Common myeloid progenitor, CD34-positive (primary cell): ENCODE measurements at regions of chr4 and their contacts with region 1.

Region 1: GRCh38 chr4:6327041-6327917 is 57.6 kb downstream of the WFS1 start:
- DNase-seq: peak; percentile 59 to 81 (median 77)
- H3K4me3 ChIP-seq: no peak overlapping the region
- H3K27ac ChIP-seq: no peak overlapping the region
- H3K4me1 ChIP-seq: peaks cover 0 to 23% (median 20%) of the 10 kb centered on the region in 4 experiments
- H3K27me3 ChIP-seq: peaks cover 0 to 70% (median 9%) of the 10 kb centered on the region in 5 experiments

Region 2: DNA sequence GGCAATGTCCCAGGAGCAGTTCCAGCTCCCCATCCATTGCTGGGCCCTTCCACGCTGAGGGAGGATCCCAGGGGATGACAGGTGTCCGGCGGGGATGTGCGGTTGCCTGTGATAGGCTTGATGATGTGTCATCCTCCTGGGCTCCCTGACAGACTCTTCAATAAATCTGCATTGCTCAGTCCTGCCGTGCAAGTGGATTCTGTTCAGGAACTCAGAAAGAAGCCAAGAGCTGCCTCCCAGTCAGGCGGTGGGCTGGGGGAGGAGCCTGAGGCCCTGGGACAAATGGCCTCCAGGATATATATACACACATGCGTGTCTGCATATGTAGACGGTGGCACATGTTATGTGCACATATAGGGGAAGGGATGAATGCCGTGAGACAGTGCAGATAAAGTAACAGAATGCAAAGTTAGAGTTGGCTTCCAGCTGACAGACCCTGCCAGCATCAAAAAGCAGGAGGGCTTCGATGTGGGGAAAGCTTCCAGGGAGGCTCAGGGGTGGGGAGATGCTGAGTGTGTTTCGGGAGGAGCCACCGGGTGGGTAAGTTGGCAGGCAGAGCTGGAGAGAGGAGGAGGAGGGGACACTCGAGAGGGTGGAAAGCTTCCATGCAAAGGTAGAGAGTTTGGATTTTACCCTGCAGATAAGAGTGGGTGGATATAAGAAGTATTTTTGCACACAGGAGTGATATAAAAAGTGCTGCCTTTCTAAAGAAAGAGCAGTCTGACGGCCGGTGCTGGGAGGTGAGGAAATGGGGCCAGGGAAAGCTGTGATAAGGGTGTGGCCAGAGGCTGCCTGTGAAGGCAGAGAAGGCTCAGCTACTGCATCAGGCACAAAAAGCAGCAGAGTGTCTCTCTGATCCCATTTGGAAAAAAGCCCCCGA is 405.9 kb before region 1 on chr4:
- CTCF ChIA-PET with region 1: no interaction called
- POLR2A ChIA-PET with region 1: no interaction called
- DNase-seq: no peak
- H3K4me3 ChIP-seq: no peak overlapping the region
- H3K27ac ChIP-seq: no peak overlapping the region
- H3K4me1 ChIP-seq: no peaks in the 10 kb centered on the region
- H3K27me3 ChIP-seq: peaks cover 0 to 71% (median 16%) of the 10 kb centered on the region in 5 experiments

Region 3: DNA sequence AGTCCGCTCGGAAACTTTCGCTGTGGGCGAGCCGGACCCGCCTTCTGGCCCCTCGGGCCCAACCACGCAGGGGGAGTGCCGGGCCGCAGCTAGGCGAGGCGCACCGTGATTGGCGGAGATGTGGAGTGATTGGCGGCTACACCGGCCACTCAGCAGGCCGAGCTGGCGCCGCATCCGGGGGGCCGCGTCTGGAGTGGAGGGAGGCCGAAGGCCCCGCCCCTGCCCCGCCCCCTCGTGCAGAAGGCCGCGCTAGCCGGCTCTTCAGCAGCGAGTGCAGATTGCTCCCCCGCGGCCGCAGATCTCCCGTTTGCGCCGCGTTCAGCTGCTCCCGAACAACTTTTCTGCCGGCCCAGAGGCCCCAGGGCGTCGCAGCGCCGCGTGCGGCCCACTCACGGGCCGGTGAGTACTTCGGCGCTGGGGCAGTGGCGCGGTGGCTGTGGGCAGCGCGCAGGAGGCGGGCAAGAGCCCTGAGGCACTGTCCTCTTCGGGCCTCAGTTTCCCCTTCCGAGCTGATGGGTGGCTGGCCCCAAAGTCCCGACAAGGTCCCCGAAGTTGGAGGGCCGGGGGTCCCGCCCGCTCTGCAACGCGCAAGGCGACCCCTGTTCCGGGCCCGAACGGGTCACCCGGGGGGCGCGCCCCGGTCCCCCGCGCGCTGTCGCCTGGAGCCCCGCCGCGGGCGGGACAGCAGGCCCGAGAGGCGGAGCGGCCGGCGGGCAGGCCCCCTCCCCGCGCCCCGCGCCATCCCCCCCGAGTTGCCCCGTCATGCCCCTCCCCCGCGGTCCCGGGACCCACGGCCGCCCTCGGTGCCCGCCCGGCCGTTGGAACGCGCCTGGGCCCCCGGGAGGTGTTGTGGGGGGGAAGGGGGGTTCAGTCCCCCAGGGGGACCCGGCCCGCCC is 57.4 kb before region 1 on chr4 and contains the start of gene WFS1:
- CTCF ChIA-PET with region 1: interaction called, 452 read pairs
- POLR2A ChIA-PET with region 1: no interaction called
- DNase-seq: peak; percentile 94 to 98 (median 96)
- H3K4me3 ChIP-seq: peak within 1 kb of the TSS; percentile 23 to 79 (median 64)
- H3K27ac ChIP-seq: no peak within 1 kb of the TSS
- H3K4me1 ChIP-seq: peaks cover 0 to 35% (median 14%) of the 10 kb centered on the region in 4 experiments
- H3K27me3 ChIP-seq: peaks cover 0 to 73% (median 31%) of the 10 kb centered on the region in 5 experiments

Region 4: GRCh38 chr4:6308899-6309643 is 18.2 kb before region 1 on chr4:
- CTCF ChIA-PET with region 1: interaction called, 18 read pairs
- POLR2A ChIA-PET with region 1: interaction called, 3 read pairs
- DNase-seq: peak; percentile 26 to 46 (median 39)
- H3K4me3 ChIP-seq: peak overlapping the region in 5 of 7 experiments; percentile 11 to 51 (median 50)
- H3K27ac ChIP-seq: no peak overlapping the region
- H3K4me1 ChIP-seq: peaks cover 0 to 16% (median 6%) of the 10 kb centered on the region in 4 experiments
- H3K27me3 ChIP-seq: peaks cover 0 to 88% (median 28%) of the 10 kb centered on the region in 5 experiments

Region 5: GRCh38 chr4:6342530-6343293 is 15.4 kb after region 1 on chr4:
- CTCF ChIA-PET with region 1: interaction called, 58 read pairs
- POLR2A ChIA-PET with region 1: no interaction called
- DNase-seq: peak; percentile 56 to 84 (median 69)
- H3K4me3 ChIP-seq: no peak overlapping the region
- H3K27ac ChIP-seq: no peak overlapping the region
- H3K4me1 ChIP-seq: peaks cover 0 to 11% (median 7%) of the 10 kb centered on the region in 4 experiments
- H3K27me3 ChIP-seq: peaks cover 0 to 35% (median 10%) of the 10 kb centered on the region in 5 experiments

Region 6: DNA sequence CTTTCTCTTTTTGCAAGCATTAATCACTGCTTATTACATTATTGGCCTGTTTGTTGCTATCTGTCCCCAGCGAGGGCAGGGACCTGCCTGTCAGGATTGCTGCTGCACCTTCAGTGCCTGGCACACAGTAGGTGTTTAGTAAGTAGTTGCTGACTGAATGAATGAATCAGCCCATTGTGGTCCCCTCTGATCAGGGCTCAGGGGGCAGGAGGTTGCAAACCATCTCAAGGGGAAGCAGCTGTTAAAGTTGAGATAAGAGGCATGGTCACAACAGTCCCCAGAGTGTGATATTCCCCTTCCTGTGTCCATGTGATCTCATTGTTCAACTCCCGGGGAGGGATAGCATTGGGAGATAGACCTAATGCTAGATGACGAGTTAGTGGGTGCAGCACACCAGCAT is 27.8 kb after region 1 on chr4:
- CTCF ChIA-PET with region 1: interaction called, 10 read pairs
- POLR2A ChIA-PET with region 1: no interaction called
- DNase-seq: peak; percentile 12 to 67 (median 31)
- H3K4me3 ChIP-seq: no peak overlapping the region
- H3K27ac ChIP-seq: no peak overlapping the region
- H3K4me1 ChIP-seq: no peaks in the 10 kb centered on the region
- H3K27me3 ChIP-seq: peaks cover 0 to 15% (median 2%) of the 10 kb centered on the region in 5 experiments

Region 7: DNA sequence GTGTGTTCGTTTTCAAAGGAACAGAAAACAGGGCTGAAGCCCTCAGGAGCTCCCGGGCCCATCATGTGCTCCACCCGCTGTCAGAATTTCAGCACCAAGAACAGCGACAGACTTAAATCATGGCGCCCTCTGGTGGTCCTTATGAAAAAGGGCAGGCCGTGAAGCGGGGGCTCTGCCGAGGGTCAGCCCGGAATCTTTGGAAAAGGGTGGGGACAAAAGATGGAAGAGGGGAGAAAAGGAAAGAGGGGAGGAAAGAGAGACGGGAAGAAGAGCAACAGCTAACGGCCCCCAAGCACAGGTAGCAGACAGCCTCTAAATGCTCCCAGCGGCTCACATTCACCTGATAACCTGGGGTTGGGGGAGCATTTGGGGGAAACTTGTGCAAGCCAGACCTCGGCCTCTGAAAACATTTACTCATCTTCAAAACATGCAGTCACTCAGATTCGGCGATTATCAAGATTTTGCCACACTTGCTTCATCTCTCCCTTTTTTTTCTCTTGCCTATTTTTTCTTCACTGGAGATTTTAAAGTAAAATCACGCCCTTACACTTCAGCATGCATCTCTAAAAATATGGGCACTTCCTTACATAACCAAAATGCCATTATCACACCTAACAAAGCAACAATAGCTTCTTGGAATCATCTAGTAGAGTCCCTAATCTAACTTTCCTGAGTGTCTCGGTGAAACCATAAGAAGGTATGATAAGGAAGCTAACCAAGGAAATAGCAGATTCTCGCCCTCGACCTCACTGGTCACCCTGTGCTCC is 219.6 kb after region 1 on chr4:
- CTCF ChIA-PET with region 1: interaction called, 20 read pairs
- POLR2A ChIA-PET with region 1: no interaction called
- DNase-seq: peak; percentile 71 to 89 (median 87)
- H3K4me3 ChIP-seq: no peak overlapping the region
- H3K27ac ChIP-seq: no peak overlapping the region
- H3K4me1 ChIP-seq: no peaks in the 10 kb centered on the region
- H3K27me3 ChIP-seq: peaks cover 0 to 46% (median 8%) of the 10 kb centered on the region in 5 experiments